PC-3 (cell line): ENCODE measurements at regions of chr22 and their contacts with region 1.

Region 1: GRCh38 chr22:45131749-45132148 is 32.0 kb upstream of the NUP50 start:
- DNase-seq: no peak
- ATAC-seq: no peak
- H3K4me3 ChIP-seq: no peak overlapping the region
- H3K27ac ChIP-seq: no peak overlapping the region
- H3K4me1 ChIP-seq: peaks cover 9% of the 10 kb centered on the region
- H3K27me3 ChIP-seq: no peaks in the 10 kb centered on the region
- CTCF ChIP-seq: no peak

Region 2: DNA sequence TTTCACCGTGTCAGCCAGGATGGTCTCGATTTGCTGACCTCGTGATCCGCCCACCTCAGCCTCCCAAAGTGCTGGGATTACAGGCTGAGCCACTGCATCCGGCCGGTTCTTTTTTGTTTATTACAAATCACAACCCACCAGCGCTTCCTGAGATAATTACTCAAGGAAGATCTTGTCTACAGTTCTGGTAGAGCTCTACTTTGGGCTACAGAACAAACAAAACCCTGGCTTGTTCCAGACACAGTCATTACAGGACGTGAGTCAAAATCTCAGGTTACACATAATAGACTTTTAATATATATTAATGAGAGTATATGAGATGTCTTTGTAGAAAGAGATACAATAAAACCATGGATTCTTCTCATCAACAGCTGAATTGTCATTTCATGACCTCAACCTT is 10.8 kb before region 1 on chr22:
- CTCF ChIA-PET with region 1: interaction called, 12 read pairs
- POLR2A ChIA-PET with region 1: no interaction called
- intact Hi-C with region 1: no loop called
- DNase-seq: peak; percentile 74
- ATAC-seq: peak; percentile 98
- H3K4me3 ChIP-seq: peak overlapping the region; percentile 51; the same call in 1 of the 2 replicates
- H3K27ac ChIP-seq: peak overlapping the region; percentile 68
- H3K4me1 ChIP-seq: peaks cover 8% of the 10 kb centered on the region
- H3K27me3 ChIP-seq: no peaks in the 10 kb centered on the region
- CTCF ChIP-seq: no peak

Region 3: DNA sequence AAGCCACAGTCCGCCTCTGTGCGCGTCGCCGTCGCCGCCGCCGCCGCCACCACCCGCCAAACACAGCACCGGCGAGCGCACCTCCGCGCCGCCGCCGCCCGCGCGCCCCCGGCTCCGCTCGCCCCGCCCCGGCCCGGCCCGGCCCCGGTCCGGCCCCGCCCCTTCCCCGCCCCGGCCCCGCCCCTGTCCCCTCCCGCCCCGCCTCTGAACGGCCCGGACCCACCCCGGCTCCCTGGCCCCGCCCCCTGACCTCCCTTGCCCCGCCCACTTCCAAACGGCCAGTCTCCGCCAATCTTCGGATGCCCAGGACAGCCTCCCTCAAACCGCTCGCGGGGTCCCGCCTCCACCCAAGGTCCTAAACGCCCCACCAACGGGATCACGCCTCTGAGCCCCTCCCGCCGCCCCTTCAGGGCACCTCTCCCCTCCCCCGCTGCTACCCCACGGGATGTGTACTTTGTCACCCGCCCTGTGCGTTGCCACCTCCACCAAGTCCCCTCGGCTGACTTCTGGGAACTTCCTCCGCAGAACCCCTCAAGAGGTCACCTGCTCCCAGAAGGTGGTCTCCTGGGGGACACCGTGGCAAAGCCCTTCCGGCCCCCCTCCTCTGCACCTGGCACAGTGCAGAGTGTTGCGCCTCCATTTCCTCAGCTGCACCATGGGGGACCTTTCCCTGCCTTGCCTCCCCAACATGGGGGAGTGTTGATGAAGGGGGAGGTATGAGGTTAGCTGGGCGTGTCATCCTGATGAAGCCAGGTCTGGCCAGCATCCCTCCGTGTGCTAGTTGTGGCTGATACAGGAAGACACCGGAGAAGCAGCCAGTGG is 109.3 kb after region 1 on chr22 and contains the start of gene KIAA0930:
- CTCF ChIA-PET with region 1: no interaction called
- POLR2A ChIA-PET with region 1: no interaction called
- intact Hi-C with region 1: no loop called
- DNase-seq: peak; percentile 44
- ATAC-seq: peak; percentile 55
- H3K4me3 ChIP-seq: peak within 1 kb of the TSS; percentile 86
- H3K27ac ChIP-seq: no peak within 1 kb of the TSS
- H3K4me1 ChIP-seq: peaks cover 22% of the 10 kb centered on the region
- H3K27me3 ChIP-seq: no peaks in the 10 kb centered on the region
- CTCF ChIP-seq: no peak
- total RNA-seq, gene KIAA0930: 29.8 and 39.2 TPM in 2 replicates

Region 4: GRCh38 chr22:45268958-45269844 is 137.5 kb after region 1 on chr22:
- CTCF ChIA-PET with region 1: no interaction called
- POLR2A ChIA-PET with region 1: no interaction called
- intact Hi-C with region 1: no loop called
- DNase-seq: peak; percentile 78
- ATAC-seq: peak; percentile 79
- H3K4me3 ChIP-seq: peak overlapping the region; percentile 74
- H3K27ac ChIP-seq: no peak overlapping the region
- H3K4me1 ChIP-seq: peaks cover 6% of the 10 kb centered on the region
- H3K27me3 ChIP-seq: no peaks in the 10 kb centered on the region
- CTCF ChIP-seq: peak; percentile 71